ENCODE measurements at regions of chr1 and their contacts with region 1.

Region 1: GRCh38 chr1:154982897-154983648 is at the start of gene FLAD1:
- DNase-seq: peak; percentile 96 to 99 (median 96)
- H3K4me3 ChIP-seq: peak within 1 kb of the TSS; percentile 79 to 92
- H3K4me3 Mint-ChIP-seq: no peak within 1 kb of the TSS
- H3K27ac ChIP-seq: peak within 1 kb of the TSS; percentile 76
- H3K27ac Mint-ChIP-seq: peak within 1 kb of the TSS in 1 of 7 donors; percentile 92
- H3K4me1 ChIP-seq: peaks cover 27% of the 10 kb centered on the region
- H3K4me1 Mint-ChIP-seq: peaks cover 4 to 8% (median 6%) of the 10 kb centered on the region in 4 donors
- H3K27me3 ChIP-seq: no peaks in the 10 kb centered on the region
- H3K27me3 Mint-ChIP-seq: no peaks in the 10 kb centered on the region
- total RNA-seq, gene FLAD1: 52.4 to 56.6 TPM

Region 2: DNA sequence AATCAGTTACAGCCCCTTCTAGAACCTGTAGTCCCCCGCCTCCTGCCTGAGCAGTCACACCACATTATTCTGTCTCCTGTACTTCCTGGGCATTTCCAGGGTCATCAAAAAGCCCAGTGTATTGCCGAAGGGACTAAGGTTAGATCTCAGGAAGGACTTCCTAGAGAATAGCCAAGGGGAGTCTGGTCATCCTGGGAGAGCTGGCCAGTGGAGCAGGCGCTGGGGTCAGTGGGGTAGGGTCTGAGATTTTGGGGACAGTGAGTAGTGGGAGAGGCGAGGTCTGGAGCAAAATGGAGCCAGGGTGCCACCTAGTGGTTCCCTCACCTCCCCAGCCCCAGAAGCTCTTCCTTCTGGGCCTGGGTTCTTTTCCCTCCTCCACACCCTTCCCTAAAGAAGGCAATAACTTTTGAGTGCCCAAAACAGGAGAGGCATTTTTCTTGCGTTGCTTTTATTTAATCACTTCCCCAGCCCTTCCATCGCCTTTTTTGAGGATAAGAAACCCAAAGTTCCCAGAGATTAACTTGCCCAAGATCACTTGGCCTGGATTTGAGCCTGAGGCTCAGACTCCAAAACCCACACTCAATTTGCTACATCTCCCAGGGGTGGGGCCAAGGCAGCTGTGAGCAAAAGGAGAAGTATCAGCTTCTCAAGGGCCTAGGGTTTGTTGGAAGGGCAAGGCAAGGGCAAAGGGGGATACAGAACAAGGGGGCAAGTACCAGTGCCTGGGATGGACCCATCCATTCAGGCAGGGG is 39.2 kb before region 1 on chr1:
- CTCF ChIA-PET with region 1: interaction called, 11 read pairs
- POLR2A ChIA-PET with region 1: interaction called, 3 read pairs
- intact Hi-C with region 1: no loop called
- DNase-seq: peak in 2 of 5 donors; percentile 45 to 47
- H3K4me3 ChIP-seq: no peak overlapping the region
- H3K4me3 Mint-ChIP-seq: peak overlapping the region in 7 of 8 donors; percentile 29 to 85 (median 67)
- H3K27ac ChIP-seq: peak overlapping the region; percentile 82
- H3K27ac Mint-ChIP-seq: peak overlapping the region; percentile 90 to 98 (median 97)
- H3K4me1 ChIP-seq: peaks cover 79% of the 10 kb centered on the region
- H3K4me1 Mint-ChIP-seq: peaks cover 47 to 67% (median 58%) of the 10 kb centered on the region in 4 donors
- H3K27me3 ChIP-seq: no peaks in the 10 kb centered on the region
- H3K27me3 Mint-ChIP-seq: no peaks in the 10 kb centered on the region

Region 3: DNA sequence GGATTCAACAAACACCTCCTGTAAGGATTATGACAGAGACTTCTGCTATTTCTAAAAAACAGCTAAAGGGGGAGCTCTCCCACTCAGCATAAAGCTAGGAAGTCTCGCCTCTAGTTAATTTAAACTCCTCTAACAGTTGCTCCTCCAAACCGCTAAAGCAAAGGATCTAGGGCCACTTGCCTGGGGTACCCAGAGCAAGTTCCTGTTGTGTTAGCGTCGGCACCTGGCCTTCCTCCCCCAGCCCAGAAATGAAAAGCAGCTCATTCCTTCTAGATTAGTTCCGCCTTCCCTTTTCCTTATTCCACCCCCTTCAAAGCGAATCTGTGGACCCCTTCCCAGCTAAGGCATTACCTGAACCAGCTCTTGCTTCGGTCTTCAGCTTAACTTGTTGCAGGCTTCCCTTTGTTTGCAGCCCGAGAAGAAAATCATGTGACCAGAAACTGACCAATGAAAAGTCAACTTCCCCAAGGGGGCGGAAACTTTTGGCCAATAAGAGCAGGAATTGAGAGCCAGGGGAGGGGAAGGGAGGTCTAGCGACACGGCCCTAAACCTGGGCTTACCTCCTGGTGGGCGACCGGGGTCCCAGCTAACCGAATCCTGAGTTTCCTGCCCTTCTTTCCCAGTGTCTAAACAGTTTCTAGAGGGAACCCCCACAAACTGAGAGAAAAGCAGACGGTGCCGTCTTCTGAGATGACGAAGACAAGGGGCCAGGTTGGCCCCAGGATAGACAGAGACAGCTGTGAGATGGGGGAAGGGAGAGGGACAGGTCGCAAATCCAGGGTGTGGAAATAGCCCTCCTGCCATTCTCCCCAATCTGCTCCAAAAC is 27.1 kb before region 1 on chr1 and contains the start of gene PBXIP1:
- CTCF ChIA-PET with region 1: interaction called, 8 read pairs
- POLR2A ChIA-PET with region 1: interaction called, 1,543 read pairs
- intact Hi-C with region 1: loop called (anchors 1 kb)
- DNase-seq: peak; percentile 92 to 94 (median 92)
- H3K4me3 ChIP-seq: peak within 1 kb of the TSS; percentile 80 to 90
- H3K4me3 Mint-ChIP-seq: peak within 1 kb of the TSS; percentile 94 to 100 (median 98)
- H3K27ac ChIP-seq: peak within 1 kb of the TSS; percentile 100
- H3K27ac Mint-ChIP-seq: peak within 1 kb of the TSS; percentile 98 to 100 (median 100)
- H3K4me1 ChIP-seq: peaks cover 75% of the 10 kb centered on the region
- H3K4me1 Mint-ChIP-seq: peaks cover 43 to 87% (median 74%) of the 10 kb centered on the region in 4 donors
- H3K27me3 ChIP-seq: no peaks in the 10 kb centered on the region
- H3K27me3 Mint-ChIP-seq: no peaks in the 10 kb centered on the region
- total RNA-seq, gene PBXIP1: 435 to 438 TPM

Region 4: GRCh38 chr1:154961497-154962262 is 21.4 kb before region 1 on chr1 and contains the start of gene PYGO2:
- CTCF ChIA-PET with region 1: interaction called, 6 read pairs
- POLR2A ChIA-PET with region 1: interaction called, 1,543 read pairs
- intact Hi-C with region 1: loop called (anchors 1 kb)
- DNase-seq: peak; percentile 81 to 88 (median 82)
- H3K4me3 ChIP-seq: peak within 1 kb of the TSS; percentile 63 to 65
- H3K4me3 Mint-ChIP-seq: peak within 1 kb of the TSS; percentile 94 to 98 (median 97)
- H3K27ac ChIP-seq: peak within 1 kb of the TSS; percentile 84
- H3K27ac Mint-ChIP-seq: peak within 1 kb of the TSS; percentile 97 to 99 (median 98)
- H3K4me1 ChIP-seq: peaks cover 43% of the 10 kb centered on the region
- H3K4me1 Mint-ChIP-seq: peaks cover 21 to 57% (median 37%) of the 10 kb centered on the region in 4 donors
- H3K27me3 ChIP-seq: no peaks in the 10 kb centered on the region
- H3K27me3 Mint-ChIP-seq: no peaks in the 10 kb centered on the region
- total RNA-seq, gene PYGO2: 78.4 to 80.2 TPM

Region 5: DNA sequence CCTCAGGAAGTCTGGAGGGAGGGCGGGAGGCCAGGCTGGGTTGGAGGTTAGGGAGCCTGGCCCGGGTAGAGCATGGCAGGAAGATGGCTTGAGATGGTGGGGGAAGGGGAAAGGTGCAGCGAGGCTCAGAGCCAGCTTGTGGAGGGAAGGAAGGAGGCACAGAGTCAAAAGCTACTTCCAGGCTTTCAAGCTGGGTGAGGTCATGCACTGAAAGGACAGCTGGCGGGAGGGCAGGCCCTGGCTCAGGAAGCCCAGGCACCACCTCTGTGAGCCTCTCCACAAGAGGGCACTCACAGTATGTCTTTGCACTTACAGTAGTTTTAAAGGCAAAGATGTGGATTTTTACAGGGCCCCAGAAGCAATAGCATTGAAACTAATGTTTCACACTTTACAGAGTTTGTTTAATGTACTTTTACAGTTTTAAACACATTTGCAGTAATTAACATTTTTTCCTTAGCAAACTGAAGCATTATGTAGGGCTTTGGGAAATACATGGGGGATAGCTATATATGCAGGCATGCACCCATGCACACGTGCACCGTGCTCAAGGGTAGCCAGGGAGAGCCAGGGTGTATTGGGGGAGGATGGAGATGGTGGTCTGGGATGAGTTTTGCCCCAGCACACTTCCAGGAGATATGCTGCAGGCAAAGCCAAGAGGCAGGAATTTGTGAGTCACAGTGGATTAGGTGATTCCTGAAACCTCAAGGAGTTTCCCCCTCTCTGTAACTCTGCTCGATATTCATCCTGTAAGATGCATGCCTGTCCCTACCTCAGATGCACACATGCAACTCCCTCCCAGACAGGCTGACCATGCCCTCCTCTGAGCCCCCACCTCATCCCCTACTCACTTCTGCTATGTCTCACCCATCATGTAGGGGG is 62.0 kb after region 1 on chr1:
- CTCF ChIA-PET with region 1: interaction called, 11 read pairs
- POLR2A ChIA-PET with region 1: no interaction called
- intact Hi-C with region 1: loop called (anchors 2 kb)
- DNase-seq: peak; percentile 60 to 66 (median 64)
- H3K4me3 ChIP-seq: no peak overlapping the region
- H3K4me3 Mint-ChIP-seq: no peak overlapping the region
- H3K27ac ChIP-seq: no peak overlapping the region
- H3K27ac Mint-ChIP-seq: peak overlapping the region in 1 of 7 donors; percentile 5
- H3K4me1 ChIP-seq: peaks cover 5% of the 10 kb centered on the region
- H3K4me1 Mint-ChIP-seq: peaks cover 7 to 16% (median 11%) of the 10 kb centered on the region in 4 donors
- H3K27me3 ChIP-seq: no peaks in the 10 kb centered on the region
- H3K27me3 Mint-ChIP-seq: no peaks in the 10 kb centered on the region